Activated CD4-positive, alpha-beta memory T cell treated with anti-CD3 and anti-CD28 coated beads for 36 hours (primary cell): ENCODE measurements at regions of chr1 and their contacts with region 1.

Region 1: DNA sequence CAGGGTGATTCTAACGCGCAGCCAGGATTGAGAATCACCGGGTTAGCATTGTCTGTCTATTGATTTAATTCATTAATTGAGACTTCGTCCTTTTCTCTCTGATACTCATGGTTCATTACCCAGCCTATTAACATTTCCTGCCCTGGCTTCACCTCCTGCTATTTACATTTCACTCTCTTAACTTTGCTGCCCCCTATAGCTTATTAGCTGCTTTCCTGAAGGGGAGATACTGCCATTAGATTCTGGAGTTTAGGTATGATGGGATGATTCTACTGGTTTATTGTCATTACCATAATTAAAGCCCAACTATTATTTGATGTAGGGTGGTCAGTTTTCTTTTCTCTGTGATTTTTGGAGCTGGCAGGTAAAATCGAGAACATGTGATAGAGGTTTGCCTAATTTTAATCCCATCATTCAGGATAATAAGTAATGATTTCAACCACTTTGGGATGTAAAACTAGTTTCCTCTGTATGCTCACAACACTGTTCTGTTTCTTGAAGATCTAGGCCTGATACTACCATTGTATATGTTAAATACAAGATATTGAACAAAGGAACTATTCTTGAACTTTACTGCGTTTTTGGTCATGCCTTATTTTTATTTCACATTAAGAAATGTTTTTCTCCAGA is 6.4 kb downstream of the PPP2R5A start:
- DNase-seq: no peak
- H3K4me3 Mint-ChIP-seq: no peak overlapping the region
- H3K27ac Mint-ChIP-seq: peak overlapping the region; percentile 47
- H3K4me1 Mint-ChIP-seq: peaks cover 81% of the 10 kb centered on the region
- H3K27me3 Mint-ChIP-seq: no peaks in the 10 kb centered on the region

Region 2: GRCh38 chr1:212062832-212063438 is 228.7 kb before region 1 on chr1:
- CTCF ChIA-PET with region 1: interaction called, 7 read pairs
- POLR2A ChIA-PET with region 1: no interaction called
- intact Hi-C with region 1: loop called (anchors 2 kb)
- DNase-seq: no peak
- H3K4me3 Mint-ChIP-seq: no peak overlapping the region
- H3K27ac Mint-ChIP-seq: no peak overlapping the region
- H3K4me1 Mint-ChIP-seq: peaks cover 4% of the 10 kb centered on the region
- H3K27me3 Mint-ChIP-seq: no peaks in the 10 kb centered on the region

Region 3: DNA sequence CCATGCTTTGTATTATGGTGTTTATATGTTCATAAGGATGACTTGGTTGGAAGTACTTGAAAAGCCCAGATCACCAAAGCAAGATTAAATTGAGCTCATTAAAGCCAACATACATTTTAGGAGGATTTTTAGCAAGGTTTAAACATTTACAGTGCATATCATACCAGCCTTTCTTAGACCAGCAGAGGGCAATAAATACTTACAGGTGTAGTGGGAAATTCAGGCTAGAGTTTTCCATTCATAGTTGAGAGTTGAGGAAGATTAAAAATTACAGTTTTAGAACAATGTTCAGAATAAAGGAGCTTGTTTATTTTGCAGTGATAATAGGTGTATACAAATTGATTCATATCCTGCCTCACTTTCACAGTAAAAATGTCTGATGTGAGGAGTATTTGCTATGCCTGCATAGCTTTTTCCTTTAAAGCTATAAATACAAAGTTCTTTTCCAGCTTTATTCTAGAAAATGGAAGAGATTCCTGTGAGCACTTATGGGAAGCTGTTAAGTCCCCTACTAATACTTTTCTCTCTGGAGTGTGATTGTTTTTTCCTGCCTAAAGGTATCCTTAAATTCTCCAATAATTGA is 220.8 kb before region 1 on chr1:
- CTCF ChIA-PET with region 1: interaction called, 22 read pairs
- POLR2A ChIA-PET with region 1: no interaction called
- intact Hi-C with region 1: loop called (anchors 2 kb)
- DNase-seq: no peak
- H3K4me3 Mint-ChIP-seq: no peak overlapping the region
- H3K27ac Mint-ChIP-seq: peak overlapping the region; percentile 32
- H3K4me1 Mint-ChIP-seq: no peaks in the 10 kb centered on the region
- H3K27me3 Mint-ChIP-seq: no peaks in the 10 kb centered on the region

Region 4: DNA sequence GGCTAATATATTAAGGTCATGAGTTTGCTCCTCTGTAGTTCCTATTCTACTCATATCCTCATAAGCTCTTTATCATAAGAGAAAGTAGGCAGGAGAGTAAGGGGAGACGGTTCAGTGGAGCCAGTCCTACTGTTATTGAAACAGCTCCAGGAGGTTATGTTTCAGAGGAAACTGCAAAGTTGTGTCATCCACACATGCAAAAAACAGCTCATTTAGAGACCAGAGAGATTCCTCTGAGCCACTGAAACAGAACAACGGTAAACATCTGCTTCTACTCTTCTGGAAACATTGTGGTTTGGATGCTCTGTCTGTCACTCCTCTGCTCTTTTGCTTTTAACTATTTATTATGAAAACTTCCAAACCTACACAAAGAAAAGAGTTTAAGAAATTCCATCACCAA is 72.7 kb before region 1 on chr1:
- CTCF ChIA-PET with region 1: no interaction called
- POLR2A ChIA-PET with region 1: interaction called, 3 read pairs
- intact Hi-C with region 1: loop called (anchors 2 kb)
- DNase-seq: peak; percentile 42
- H3K4me3 Mint-ChIP-seq: no peak overlapping the region
- H3K27ac Mint-ChIP-seq: no peak overlapping the region
- H3K4me1 Mint-ChIP-seq: peaks cover 18% of the 10 kb centered on the region
- H3K27me3 Mint-ChIP-seq: peaks cover 2% of the 10 kb centered on the region

Region 5: DNA sequence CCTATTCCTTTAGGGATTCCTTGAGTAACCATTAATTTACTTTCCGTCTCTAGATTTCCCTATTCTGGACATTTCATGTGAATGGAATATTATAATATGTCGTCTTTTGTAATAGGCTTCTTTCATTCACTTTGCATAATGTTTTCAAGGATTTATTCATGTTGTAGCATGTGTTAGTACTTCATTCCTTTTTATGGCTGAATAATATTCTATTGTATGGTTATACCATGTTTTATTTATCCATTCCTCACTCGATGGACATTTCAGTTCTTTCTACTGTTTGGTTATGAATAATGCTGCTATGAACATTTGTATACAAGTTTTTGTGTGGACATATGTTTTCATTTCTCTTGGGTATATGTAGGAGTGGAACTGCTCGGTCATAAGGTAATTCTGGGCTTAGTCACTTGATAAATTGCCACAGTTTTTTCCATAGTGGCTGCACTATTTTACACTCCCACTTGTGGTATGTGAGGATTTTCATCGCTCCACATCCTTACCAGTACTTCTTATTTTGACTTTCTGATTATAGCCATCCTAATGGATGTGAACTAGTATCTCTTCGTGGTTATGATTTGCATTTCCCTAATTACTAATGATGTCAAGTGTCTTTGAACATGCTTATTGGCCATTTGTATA is 11.2 kb after region 1 on chr1:
- CTCF ChIA-PET with region 1: no interaction called
- POLR2A ChIA-PET with region 1: no interaction called
- intact Hi-C with region 1: loop called (anchors 1 kb)
- DNase-seq: no peak
- H3K4me3 Mint-ChIP-seq: no peak overlapping the region
- H3K27ac Mint-ChIP-seq: no peak overlapping the region
- H3K4me1 Mint-ChIP-seq: peaks cover 52% of the 10 kb centered on the region
- H3K27me3 Mint-ChIP-seq: no peaks in the 10 kb centered on the region

Region 6: DNA sequence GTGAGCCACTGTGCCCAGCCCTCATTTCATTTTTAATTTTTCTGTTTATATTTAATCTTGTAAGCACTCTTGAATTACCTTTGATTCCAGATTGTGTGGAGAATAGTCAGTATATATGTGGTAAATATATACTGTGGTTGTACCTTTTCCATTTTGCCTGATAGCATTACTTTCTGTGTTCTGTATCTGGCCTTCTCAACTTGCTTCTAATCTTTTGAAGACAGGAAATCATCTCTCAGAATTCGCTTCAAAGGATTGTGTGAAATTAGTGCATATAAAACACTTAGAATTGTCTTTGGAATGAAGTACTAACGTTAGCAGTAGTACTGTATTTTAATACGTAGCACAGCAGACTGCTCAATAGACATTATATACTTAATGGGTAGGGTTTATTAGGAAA is 31.4 kb after region 1 on chr1:
- CTCF ChIA-PET with region 1: no interaction called
- POLR2A ChIA-PET with region 1: no interaction called
- intact Hi-C with region 1: no loop called
- DNase-seq: no peak
- H3K4me3 Mint-ChIP-seq: no peak overlapping the region
- H3K27ac Mint-ChIP-seq: no peak overlapping the region
- H3K4me1 Mint-ChIP-seq: peaks cover 24% of the 10 kb centered on the region
- H3K27me3 Mint-ChIP-seq: no peaks in the 10 kb centered on the region

Region 7: GRCh38 chr1:212355230-212355969 is 63.8 kb after region 1 on chr1:
- CTCF ChIA-PET with region 1: interaction called, 3 read pairs
- POLR2A ChIA-PET with region 1: no interaction called
- intact Hi-C with region 1: loop called (anchors 2 kb)
- DNase-seq: no peak
- H3K4me3 Mint-ChIP-seq: no peak overlapping the region
- H3K27ac Mint-ChIP-seq: no peak overlapping the region
- H3K4me1 Mint-ChIP-seq: peaks cover 22% of the 10 kb centered on the region
- H3K27me3 Mint-ChIP-seq: no peaks in the 10 kb centered on the region